ENCODE measurements at regions of chr15 and their contacts with region 1.

Region 1: GRCh38 chr15:34337557-34338306 is at the start of gene SLC12A6:
- DNase-seq: peak; percentile 91
- H3K4me3 Mint-ChIP-seq: peak within 1 kb of the TSS; percentile 95
- H3K27ac Mint-ChIP-seq: peak within 1 kb of the TSS; percentile 97
- H3K4me1 Mint-ChIP-seq: peaks cover 53% of the 10 kb centered on the region
- H3K27me3 Mint-ChIP-seq: no peaks in the 10 kb centered on the region
- total RNA-seq, gene SLC12A6: 24.6 to 28.7 TPM

Region 2: GRCh38 chr15:33194704-33195670 is 1142.7 kb before region 1 on chr15 and contains the start of gene FMN1:
- CTCF ChIA-PET with region 1: no interaction called
- intact Hi-C with region 1: loop called (anchors 5 kb)
- DNase-seq: peak; percentile 91
- H3K4me3 Mint-ChIP-seq: peak within 1 kb of the TSS; percentile 63
- H3K27ac Mint-ChIP-seq: no peak within 1 kb of the TSS
- H3K4me1 Mint-ChIP-seq: peaks cover 21% of the 10 kb centered on the region
- H3K27me3 Mint-ChIP-seq: peaks cover 17% of the 10 kb centered on the region
- total RNA-seq, gene FMN1: 0.02 to 0.12 TPM

Region 3: DNA sequence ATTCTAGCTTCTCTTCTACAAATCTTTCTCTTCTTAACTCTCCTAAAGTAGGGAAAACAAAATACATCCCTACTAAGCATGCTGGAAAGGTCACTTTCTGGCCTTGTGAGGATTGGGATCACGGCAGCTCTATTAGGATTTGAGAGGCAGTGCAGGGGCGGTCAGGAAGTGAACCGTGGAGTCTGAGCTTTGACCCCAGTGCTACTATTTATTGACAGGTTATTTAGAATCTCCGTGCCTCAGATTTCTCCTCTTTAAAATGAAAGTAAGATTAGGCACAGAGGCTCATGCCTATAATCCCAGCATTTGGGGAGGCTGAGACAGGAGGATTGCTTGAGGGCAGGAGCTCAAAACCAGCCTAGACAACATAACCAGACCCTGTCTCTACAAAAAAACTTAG is 411.5 kb before region 1 on chr15:
- CTCF ChIA-PET with region 1: no interaction called
- intact Hi-C with region 1: no loop called
- DNase-seq: no peak
- H3K4me3 Mint-ChIP-seq: no peak overlapping the region
- H3K27ac Mint-ChIP-seq: no peak overlapping the region
- H3K4me1 Mint-ChIP-seq: no peaks in the 10 kb centered on the region
- H3K27me3 Mint-ChIP-seq: no peaks in the 10 kb centered on the region

Region 4: DNA sequence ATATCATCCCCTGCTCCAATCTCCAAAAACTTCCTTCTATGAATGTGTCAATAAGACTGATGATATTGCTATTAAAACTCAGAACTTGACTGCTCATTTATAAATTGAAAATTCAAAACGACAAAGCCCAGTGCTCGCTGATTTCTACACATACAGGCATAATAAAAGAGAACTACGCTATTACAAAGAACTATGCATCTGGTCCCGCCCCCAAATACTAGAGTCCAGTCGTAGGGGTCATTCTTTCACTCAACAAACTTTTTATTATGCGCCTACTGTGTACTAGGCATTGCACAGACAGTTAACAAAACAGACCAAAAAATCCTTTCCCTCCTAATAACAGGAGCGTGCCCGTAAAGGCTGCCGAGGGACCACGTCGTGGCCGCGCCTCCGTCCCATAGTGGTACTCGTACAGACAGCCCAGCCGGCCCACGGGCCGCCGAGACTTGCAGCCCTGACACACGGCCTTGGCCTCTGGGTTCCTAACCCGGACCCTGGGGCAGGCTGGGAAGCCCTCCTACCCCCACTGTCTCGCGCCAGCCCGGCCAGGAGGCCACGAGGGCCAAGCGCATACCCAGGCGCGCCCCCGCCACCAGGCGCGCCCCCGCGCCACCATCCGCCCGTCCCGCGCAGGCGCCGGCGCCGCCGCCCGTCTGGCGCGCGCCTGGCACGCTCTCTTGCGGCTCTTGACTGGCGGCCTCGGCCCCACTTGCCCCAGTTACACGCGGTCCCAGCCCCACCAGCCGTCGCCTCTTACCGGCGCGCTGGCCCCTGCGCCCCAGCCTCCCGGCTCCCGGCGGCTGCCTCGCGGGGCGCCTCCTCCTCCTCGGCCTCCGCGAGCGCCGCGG is 299.5 kb before region 1 on chr15:
- CTCF ChIA-PET with region 1: no interaction called
- intact Hi-C with region 1: loop called (anchors 2 kb)
- DNase-seq: peak; percentile 70
- H3K4me3 Mint-ChIP-seq: peak overlapping the region; percentile 92
- H3K27ac Mint-ChIP-seq: peak overlapping the region; percentile 92
- H3K4me1 Mint-ChIP-seq: peaks cover 17% of the 10 kb centered on the region
- H3K27me3 Mint-ChIP-seq: no peaks in the 10 kb centered on the region

Region 5: DNA sequence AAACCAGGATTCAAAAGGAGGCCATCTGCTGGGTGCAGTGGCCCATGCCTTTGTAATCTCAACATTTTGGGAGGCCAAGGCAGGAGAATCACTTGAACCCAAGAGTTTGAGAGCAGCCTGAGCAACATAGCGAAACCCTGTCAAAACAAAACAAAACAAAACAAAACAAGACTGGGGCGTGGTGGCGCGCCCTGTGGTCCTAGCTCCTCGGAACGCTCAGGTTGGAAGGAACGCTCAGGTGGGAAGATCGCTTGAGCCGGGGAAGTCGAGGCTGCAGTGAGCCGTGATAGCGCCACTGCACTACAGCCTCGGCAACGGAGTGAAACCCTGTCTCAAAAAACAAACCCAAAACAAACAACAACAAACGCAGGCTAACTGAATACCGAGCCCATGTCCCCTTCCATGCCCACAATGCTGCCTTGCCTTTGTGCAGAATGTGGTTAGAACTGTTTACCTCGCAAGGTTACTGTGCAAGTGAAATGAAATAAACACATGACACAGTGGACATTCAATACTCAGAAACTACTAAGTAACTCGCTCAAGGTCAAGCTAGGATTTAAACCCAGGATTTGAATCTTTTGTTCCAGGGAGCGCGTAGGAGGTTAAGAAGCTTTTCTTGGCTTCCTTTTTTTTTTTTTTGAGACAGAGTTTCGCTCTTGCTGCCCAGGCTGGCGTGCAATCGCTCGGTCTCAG is 113.7 kb before region 1 on chr15:
- CTCF ChIA-PET with region 1: no interaction called
- intact Hi-C with region 1: loop called (anchors 1 kb)
- DNase-seq: no peak
- H3K4me3 Mint-ChIP-seq: peak overlapping the region; percentile 96
- H3K27ac Mint-ChIP-seq: peak overlapping the region; percentile 97
- H3K4me1 Mint-ChIP-seq: peaks cover 31% of the 10 kb centered on the region
- H3K27me3 Mint-ChIP-seq: no peaks in the 10 kb centered on the region

Region 6: DNA sequence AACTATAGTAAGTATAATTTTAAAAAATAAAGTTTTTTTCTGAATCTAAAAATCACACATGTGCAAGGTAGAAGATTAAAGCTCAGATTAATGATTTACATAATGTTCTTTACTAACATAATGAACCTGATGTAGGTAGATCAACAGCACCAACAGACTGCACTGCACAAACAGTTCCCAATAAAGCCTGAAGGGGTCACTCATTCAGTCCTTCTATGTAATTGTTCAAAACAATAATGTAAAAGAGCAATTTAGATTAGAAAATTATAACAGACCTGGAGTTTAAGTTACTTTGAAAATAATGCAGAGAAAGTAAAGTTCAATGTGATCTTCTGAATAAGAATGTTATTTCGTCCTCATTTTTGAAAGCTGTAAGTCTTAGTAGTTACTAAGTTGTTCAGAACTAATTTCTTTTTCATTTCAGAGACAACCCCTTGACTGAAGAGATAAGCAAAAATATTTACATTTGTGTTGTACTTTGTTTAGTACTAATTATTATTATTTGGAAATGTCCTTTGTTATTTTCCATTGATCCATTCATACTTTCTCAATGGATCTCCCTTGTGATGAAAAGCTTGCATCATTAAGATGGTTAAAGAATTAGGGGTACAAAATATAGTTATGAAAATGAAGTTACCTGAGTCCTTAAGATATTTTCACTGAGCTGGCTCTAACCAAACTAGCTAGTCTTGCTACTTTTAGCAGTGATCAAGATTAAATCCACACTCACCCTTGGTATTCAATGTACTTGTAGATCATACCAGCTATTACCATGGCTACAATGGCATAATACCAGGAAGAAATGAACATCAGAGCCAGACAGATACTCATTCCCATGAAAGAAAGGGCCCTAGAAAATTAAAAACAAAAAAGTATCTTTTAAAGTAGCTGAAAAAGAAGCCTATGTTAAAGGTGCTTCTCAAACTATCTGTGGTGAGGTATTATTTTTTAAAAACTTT is 96.1 kb before region 1 on chr15:
- CTCF ChIA-PET with region 1: interaction called, 15 read pairs
- intact Hi-C with region 1: loop called (anchors 1 kb)
- DNase-seq: peak; percentile 45
- H3K4me3 Mint-ChIP-seq: no peak overlapping the region
- H3K27ac Mint-ChIP-seq: peak overlapping the region; percentile 54
- H3K4me1 Mint-ChIP-seq: peaks cover 38% of the 10 kb centered on the region
- H3K27me3 Mint-ChIP-seq: no peaks in the 10 kb centered on the region